ENCODE measurements at regions of chrX and their contacts with region 1.

Region 1: GRCh38 chrX:109384699-109385098 is 97.2 kb downstream of the GUCY2F start:
- DNase-seq: no peak
- ATAC-seq: peak; percentile 30; the same call in 1 of the 2 replicates
- H3K4me3 Mint-ChIP-seq: no peak overlapping the region
- H3K27ac Mint-ChIP-seq: no peak overlapping the region
- H3K4me1 Mint-ChIP-seq: peaks cover 3% of the 10 kb centered on the region; the same call in 1 of the 2 replicates
- H3K27me3 Mint-ChIP-seq: no peaks in the 10 kb centered on the region; the same call in 1 of the 2 replicates
- CTCF ChIP-seq: no peak

Region 2: GRCh38 chrX:108699368-108699767 is 685.3 kb before region 1 on chrX:
- CTCF ChIA-PET with region 1: interaction called, 24 read pairs
- POLR2A ChIA-PET with region 1: no interaction called
- DNase-seq: no peak
- ATAC-seq: peak; percentile 78
- H3K4me3 Mint-ChIP-seq: no peak overlapping the region
- H3K27ac Mint-ChIP-seq: no peak overlapping the region
- H3K4me1 Mint-ChIP-seq: no peaks in the 10 kb centered on the region
- H3K27me3 Mint-ChIP-seq: no peaks in the 10 kb centered on the region; the same call in 1 of the 2 replicates
- CTCF ChIP-seq: no peak

Region 3: DNA sequence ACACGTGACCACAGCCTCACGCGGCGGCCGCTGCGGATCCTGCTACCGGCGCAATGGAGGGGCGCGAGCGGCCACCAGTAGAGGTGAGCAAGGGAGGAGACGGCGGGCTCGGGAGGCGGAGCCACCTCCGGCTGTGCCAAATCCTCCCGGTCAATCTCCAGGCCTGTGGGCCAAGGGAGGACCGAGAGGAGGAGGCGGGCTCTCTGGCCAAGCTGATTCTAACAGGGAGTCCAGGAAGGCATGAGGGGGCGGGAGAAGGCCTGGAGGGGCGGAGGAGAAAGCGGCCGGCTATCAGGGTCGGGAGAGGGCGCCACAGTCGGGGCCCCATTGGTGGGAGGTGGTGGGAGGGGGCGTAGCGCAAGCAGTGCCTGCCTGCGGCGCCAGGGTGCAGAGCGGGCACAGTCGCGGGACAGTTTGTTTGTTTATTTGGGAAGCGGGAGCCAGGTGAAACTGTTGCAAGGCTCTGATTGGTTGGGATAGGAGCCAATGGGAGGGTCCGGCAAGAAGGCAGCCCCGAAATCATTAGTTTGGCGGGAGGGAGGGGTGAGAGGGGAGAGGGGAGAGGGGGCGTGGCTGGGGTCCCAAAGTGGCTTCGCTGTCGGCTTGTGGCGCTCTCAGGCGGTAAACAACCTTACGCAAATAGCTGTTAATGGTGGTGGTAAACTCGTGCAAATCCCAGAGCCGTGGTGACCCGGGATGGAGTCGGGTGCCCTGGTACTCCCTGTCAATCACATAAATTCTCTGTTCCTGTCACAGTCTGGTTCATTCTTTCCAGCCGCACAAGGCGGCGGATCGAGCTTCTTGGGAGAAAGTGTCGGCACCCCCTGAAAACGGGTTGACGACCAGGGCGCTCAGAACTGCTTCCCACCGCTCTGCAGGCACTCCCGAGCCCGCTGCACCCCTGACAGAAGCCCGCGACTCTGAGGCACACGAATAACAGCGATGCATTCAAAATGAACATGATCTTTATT is 647.9 kb before region 1 on chrX and contains the start of gene IRS4:
- CTCF ChIA-PET with region 1: interaction called, 11 read pairs
- POLR2A ChIA-PET with region 1: no interaction called
- DNase-seq: peak; percentile 84
- ATAC-seq: peak; percentile 80
- H3K4me3 Mint-ChIP-seq: peak within 1 kb of the TSS; percentile 78
- H3K27ac Mint-ChIP-seq: peak within 1 kb of the TSS; percentile 80
- H3K4me1 Mint-ChIP-seq: peaks cover 24% of the 10 kb centered on the region
- H3K27me3 Mint-ChIP-seq: peaks cover 32% of the 10 kb centered on the region
- CTCF ChIP-seq: no peak
- total RNA-seq, gene IRS4: 10.5 to 11.4 TPM (median 11.0 TPM) in 3 replicates

Region 4: GRCh38 chrX:109049902-109050301 is 334.8 kb before region 1 on chrX:
- CTCF ChIA-PET with region 1: interaction called, 23 read pairs
- POLR2A ChIA-PET with region 1: no interaction called
- DNase-seq: peak; percentile 14
- ATAC-seq: peak; percentile 65
- H3K4me3 Mint-ChIP-seq: no peak overlapping the region
- H3K27ac Mint-ChIP-seq: peak overlapping the region; percentile 78
- H3K4me1 Mint-ChIP-seq: peaks cover 10% of the 10 kb centered on the region
- H3K27me3 Mint-ChIP-seq: no peaks in the 10 kb centered on the region
- CTCF ChIP-seq: no peak

Measured in WTC11 (cell line).